CD14-positive monocyte (primary cell): ENCODE measurements at regions of chr17 and their contacts with region 1.

Region 1: GRCh38 chr17:82457997-82458864 is at the start of gene NARF:
- DNase-seq: peak; percentile 96 to 97 (median 97)
- H3K4me3 ChIP-seq: peak within 1 kb of the TSS; percentile 78 to 89 (median 86)
- H3K4me3 Mint-ChIP-seq: peak within 1 kb of the TSS; percentile 88 to 94
- H3K27ac ChIP-seq: peak within 1 kb of the TSS; percentile 95 to 99
- H3K27ac Mint-ChIP-seq: peak within 1 kb of the TSS; percentile 97 to 99 (median 99)
- H3K4me1 ChIP-seq: peaks cover 30 to 36% of the 10 kb centered on the region in 2 donors
- H3K4me1 Mint-ChIP-seq: peaks cover 27% of the 10 kb centered on the region
- H3K27me3 ChIP-seq: no peaks in the 10 kb centered on the region
- H3K27me3 Mint-ChIP-seq: peaks cover 0 to 1% (median 0%) of the 10 kb centered on the region in 3 donors
- CTCF ChIP-seq: no peak
- polyA plus RNA-seq, gene NARF: 91.2 to 101 (median 100) TPM

Region 2: GRCh38 chr17:82292251-82293154 is 165.7 kb before region 1 on chr17:
- intact Hi-C with region 1: loop called in 1 of 2 experiments (anchors 10 kb)
- DNase-seq: peak; percentile 93 to 98 (median 95)
- H3K4me3 ChIP-seq: peak overlapping the region; percentile 51 to 91 (median 62)
- H3K4me3 Mint-ChIP-seq: peak overlapping the region; percentile 78 to 89
- H3K27ac ChIP-seq: peak overlapping the region; percentile 85 to 90
- H3K27ac Mint-ChIP-seq: peak overlapping the region; percentile 79 to 92 (median 89)
- H3K4me1 ChIP-seq: peaks cover 38 to 46% of the 10 kb centered on the region in 2 donors
- H3K4me1 Mint-ChIP-seq: peaks cover 54% of the 10 kb centered on the region
- H3K27me3 ChIP-seq: no peaks in the 10 kb centered on the region
- H3K27me3 Mint-ChIP-seq: peaks cover 0 to 6% (median 5%) of the 10 kb centered on the region in 3 donors
- CTCF ChIP-seq: no peak

Region 3: DNA sequence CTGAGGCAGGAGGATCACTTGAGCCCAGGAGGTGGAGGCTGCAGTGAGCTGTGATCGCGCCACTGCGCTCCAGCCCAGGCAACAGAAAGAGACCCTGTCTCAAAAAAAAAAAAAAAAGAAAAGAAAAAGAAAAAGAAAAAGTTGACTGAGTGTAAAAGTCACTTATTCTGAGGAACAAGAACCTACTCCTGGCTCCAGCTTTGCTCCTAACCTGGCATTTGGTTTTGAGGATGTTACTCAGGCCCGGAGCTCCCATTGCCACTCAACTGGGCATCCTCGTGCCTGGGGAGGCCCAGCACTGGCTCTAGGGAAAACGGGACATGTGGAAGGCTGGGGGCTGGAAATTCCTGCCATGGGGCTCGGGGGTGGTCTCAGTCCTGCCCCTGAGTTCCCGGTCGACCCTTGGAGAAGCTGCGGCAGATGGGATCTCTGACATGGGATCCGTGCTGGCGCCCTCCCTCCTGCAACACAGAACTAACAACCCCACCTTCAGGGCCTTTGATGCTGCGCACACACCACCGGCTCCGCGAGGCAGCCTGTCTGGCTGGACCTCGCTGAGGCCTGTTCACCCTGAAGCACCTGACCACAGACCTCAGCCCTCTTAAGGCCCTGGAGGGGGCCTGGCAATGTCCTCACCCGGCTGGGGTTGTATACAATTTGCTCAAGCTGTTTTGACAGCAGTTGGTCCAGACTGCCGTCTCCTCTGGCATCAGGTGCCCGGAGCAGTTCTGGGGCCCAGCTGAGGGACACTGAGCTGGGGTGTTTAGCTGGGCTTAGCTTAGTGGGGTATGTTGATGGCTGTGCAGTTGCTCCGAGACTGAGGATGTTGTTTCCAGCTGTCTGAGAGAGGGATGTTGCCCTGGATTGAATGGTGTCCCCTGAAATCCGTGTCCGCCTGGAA is 153.2 kb before region 1 on chr17:
- intact Hi-C with region 1: no loop called
- DNase-seq: no peak
- H3K4me3 ChIP-seq: no peak overlapping the region
- H3K4me3 Mint-ChIP-seq: peak overlapping the region in 1 of 2 donors; percentile 71
- H3K27ac ChIP-seq: no peak overlapping the region
- H3K27ac Mint-ChIP-seq: no peak overlapping the region
- H3K4me1 ChIP-seq: peaks cover 0 to 7% of the 10 kb centered on the region in 2 donors
- H3K4me1 Mint-ChIP-seq: peaks cover 17% of the 10 kb centered on the region
- H3K27me3 ChIP-seq: peaks cover 5 to 40% of the 10 kb centered on the region in 2 donors
- H3K27me3 Mint-ChIP-seq: peaks cover 42 to 69% (median 52%) of the 10 kb centered on the region in 3 donors
- CTCF ChIP-seq: no peak

Region 4: GRCh38 chr17:82698065-82698973 is 240.1 kb after region 1 on chr17 and contains the start of gene RAB40B:
- intact Hi-C with region 1: loop called in 1 of 2 experiments (anchors 10 kb)
- DNase-seq: peak; percentile 98
- H3K4me3 ChIP-seq: peak within 1 kb of the TSS; percentile 32 to 73 (median 48)
- H3K4me3 Mint-ChIP-seq: peak within 1 kb of the TSS; percentile 75 to 92
- H3K27ac ChIP-seq: no peak within 1 kb of the TSS
- H3K27ac Mint-ChIP-seq: peak within 1 kb of the TSS in 3 of 7 donors; percentile 26 to 78 (median 70)
- H3K4me1 ChIP-seq: peaks cover 13 to 20% of the 10 kb centered on the region in 2 donors
- H3K4me1 Mint-ChIP-seq: peaks cover 9% of the 10 kb centered on the region
- H3K27me3 ChIP-seq: peaks cover 9 to 20% of the 10 kb centered on the region in 2 donors
- H3K27me3 Mint-ChIP-seq: peaks cover 23 to 31% (median 28%) of the 10 kb centered on the region in 3 donors
- CTCF ChIP-seq: no peak
- polyA plus RNA-seq, gene RAB40B: 0.75 to 2.2 (median 0.95) TPM

Region 5: DNA sequence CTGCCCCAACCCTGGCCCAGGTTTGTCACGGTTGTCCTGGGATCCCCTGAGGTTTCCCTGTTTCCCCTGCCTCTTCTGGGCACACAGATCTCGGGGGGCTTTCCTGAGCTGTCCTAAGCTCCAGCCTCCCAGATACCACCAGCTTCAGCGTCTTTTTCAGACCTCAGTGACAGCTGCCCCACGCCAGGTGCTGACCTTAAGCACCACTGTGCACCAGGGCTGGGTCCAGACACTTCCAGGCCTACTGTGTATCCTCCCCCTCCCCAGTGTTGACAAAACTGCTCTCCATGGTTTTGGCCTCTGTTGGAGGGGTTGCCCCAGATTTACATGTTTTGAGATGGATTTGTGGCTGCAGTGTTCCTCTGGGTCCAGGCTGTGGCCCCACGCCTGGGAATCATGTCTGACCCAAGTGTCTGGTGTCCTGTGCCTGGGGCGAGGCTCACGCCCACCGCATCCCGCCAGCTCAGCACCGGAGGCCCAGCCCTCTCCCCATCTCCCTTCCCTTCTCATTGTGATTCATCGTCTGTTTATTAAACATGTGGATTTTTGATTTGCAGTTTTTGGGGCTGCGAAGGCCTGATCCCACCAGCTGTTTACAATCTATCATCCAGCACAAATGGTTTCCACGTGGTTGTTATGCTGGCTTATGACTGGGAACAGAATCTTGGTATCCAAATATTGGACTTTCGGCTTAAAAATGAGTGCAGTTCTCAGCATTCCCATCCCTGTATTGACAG is 703.2 kb after region 1 on chr17:
- intact Hi-C with region 1: no loop called
- DNase-seq: no peak
- H3K4me3 ChIP-seq: no peak overlapping the region
- H3K4me3 Mint-ChIP-seq: no peak overlapping the region
- H3K27ac ChIP-seq: no peak overlapping the region
- H3K27ac Mint-ChIP-seq: peak overlapping the region in 1 of 7 donors; percentile 13
- H3K4me1 ChIP-seq: no peaks in the 10 kb centered on the region
- H3K4me1 Mint-ChIP-seq: peaks cover 2% of the 10 kb centered on the region
- H3K27me3 ChIP-seq: peaks cover 2 to 6% of the 10 kb centered on the region in 2 donors
- H3K27me3 Mint-ChIP-seq: peaks cover 15 to 26% (median 24%) of the 10 kb centered on the region in 3 donors
- CTCF ChIP-seq: no peak